ENCODE measurements at regions of chr1 and their contacts with region 1.

Region 1: DNA sequence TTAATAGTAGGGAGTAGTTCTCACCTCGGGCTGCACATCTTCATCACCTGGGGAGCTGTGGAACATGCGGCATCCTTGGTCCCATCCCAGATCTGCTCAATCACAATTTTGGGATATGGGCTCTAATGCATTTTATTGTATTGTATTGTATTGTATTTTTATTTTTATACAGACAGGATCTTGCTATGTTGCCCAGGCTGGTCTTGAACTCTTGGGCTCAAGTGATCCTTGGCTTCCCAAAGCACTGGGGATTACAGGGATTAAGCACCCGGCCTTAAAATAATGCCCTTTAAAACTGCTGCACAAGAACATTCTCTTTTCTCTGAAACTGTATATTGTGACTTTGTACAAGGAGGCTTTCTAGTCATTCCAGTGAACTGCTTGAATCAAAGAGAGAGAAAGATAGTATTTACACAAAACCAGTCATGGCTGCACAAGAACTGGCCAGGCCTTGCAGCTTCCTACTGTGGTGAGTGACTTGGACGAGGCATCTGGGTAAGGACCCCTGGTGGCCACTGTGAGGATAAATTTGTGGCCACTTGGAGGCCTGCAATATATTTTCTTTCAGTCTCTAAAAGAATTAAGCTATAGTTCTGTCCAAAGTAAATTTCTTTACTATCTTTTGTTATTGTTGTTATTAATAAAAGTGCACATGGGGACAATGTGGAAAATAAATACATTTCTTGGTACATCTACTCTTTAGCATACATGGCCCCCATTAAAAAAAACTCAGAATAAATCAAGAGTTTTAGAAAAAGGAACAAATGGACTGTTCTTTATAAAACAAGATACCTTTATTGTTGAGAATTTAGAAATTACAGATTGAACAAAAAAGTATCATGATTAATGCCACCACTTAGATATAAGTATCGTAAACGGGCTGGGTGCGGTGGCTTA is 48.0 kb downstream of the TBCE start:
- DNase-seq: peak; percentile 60 to 71 (median 65)
- ATAC-seq: peak; percentile 70 to 82 (median 73)
- H3K4me3 ChIP-seq: no peak overlapping the region
- H3K27ac ChIP-seq: no peak overlapping the region
- H3K4me1 ChIP-seq: peaks cover 0 to 21% (median 9%) of the 10 kb centered on the region in 4 donors
- H3K27me3 ChIP-seq: no peaks in the 10 kb centered on the region
- CTCF ChIP-seq: peak; percentile 76 to 86 (median 79)
- POLR2A ChIP-seq: no peak

Region 2: GRCh38 chr1:235253219-235253962 is 161.9 kb before region 1 on chr1:
- intact Hi-C with region 1: loop called (anchors 10 kb)
- DNase-seq: peak in 2 of 3 donors; percentile 36 to 69
- ATAC-seq: peak; percentile 93 to 97 (median 95)
- H3K4me3 ChIP-seq: no peak overlapping the region
- H3K27ac ChIP-seq: no peak overlapping the region
- H3K4me1 ChIP-seq: peaks cover 0 to 10% (median 0%) of the 10 kb centered on the region in 4 donors
- H3K27me3 ChIP-seq: no peaks in the 10 kb centered on the region
- CTCF ChIP-seq: peak; percentile 75 to 89 (median 88)
- POLR2A ChIP-seq: no peak

Measured in right lobe of liver (tissue), 6 donors.